Left ventricle myocardium inferior (tissue), 1 donor: ENCODE measurements at regions of chr6 and their contacts with region 1.

Region 1: GRCh38 chr6:110179401-110180227 is at the start of gene WASF1:
- DNase-seq: peak; percentile 92
- H3K4me3 ChIP-seq: peak within 1 kb of the TSS; percentile 94
- H3K27ac ChIP-seq: peak within 1 kb of the TSS; percentile 91
- H3K4me1 ChIP-seq: peaks cover 62% of the 10 kb centered on the region
- H3K27me3 ChIP-seq: no peaks in the 10 kb centered on the region
- CTCF ChIP-seq: no peak
- total RNA-seq, gene WASF1: 0.80 TPM

Region 2: GRCh38 chr6:110389689-110390382 is 210.2 kb after region 1 on chr6:
- intact Hi-C with region 1: loop called (anchors 5 kb)
- DNase-seq: no peak
- H3K4me3 ChIP-seq: no peak overlapping the region
- H3K27ac ChIP-seq: peak overlapping the region; percentile 27
- H3K4me1 ChIP-seq: peaks cover 23% of the 10 kb centered on the region
- H3K27me3 ChIP-seq: no peaks in the 10 kb centered on the region
- CTCF ChIP-seq: no peak